ENCODE measurements at regions of chr7 and their contacts with region 1.

Region 1: GRCh38 chr7:18590744-18591340 is 95.3 kb downstream of the HDAC9 start:
- DNase-seq: no peak
- H3K4me3 ChIP-seq: no peak overlapping the region
- H3K27ac ChIP-seq: no peak overlapping the region
- H3K4me1 ChIP-seq: peaks cover 0 to 7% (median 3%) of the 10 kb centered on the region in 4 donors
- H3K27me3 ChIP-seq: no peaks in the 10 kb centered on the region
- CTCF ChIP-seq: peak; percentile 31 to 49 (median 42)
- EP300 ChIP-seq: no peak
- POLR2A ChIP-seq: no peak

Region 2: GRCh38 chr7:18520450-18521235 is 70.2 kb before region 1 on chr7:
- in situ Hi-C with region 1: no loop called
- intact Hi-C with region 1: no loop called
- DNase-seq: no peak
- H3K4me3 ChIP-seq: no peak overlapping the region
- H3K27ac ChIP-seq: peak overlapping the region in 3 of 4 donors; percentile 28 to 57 (median 40)
- H3K4me1 ChIP-seq: no peaks in the 10 kb centered on the region
- H3K27me3 ChIP-seq: no peaks in the 10 kb centered on the region
- CTCF ChIP-seq: no peak
- EP300 ChIP-seq: no peak
- POLR2A ChIP-seq: no peak

Region 3: DNA sequence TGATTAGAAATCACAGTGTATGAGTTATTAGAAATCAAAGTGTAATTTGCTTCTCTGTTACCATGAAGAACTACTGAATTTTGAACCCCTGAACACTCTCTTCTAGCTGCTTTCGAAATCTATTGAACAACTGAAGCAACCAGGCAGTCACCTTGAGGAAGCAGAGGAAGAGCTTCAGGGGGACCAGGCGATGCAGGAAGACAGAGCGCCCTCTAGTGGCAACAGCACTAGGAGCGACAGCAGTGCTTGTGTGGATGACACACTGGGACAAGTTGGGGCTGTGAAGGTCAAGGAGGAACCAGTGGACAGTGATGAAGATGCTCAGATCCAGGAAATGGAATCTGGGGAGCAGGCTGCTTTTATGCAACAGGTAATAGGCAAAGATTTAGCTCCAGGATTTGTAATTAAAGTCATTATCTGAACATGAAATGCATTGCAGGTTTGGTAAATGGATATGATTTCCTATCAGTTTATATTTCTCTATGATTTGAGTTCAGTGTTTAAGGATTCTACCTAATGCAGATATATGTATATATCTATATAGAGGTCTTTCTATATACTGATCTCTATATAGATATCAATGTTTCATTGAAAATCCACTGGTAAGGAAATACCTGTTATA is 75.4 kb after region 1 on chr7:
- in situ Hi-C with region 1: loop called in 1 of 4 experiments (anchors 10 kb)
- intact Hi-C with region 1: no loop called
- DNase-seq: peak; percentile 81
- H3K4me3 ChIP-seq: no peak overlapping the region
- H3K27ac ChIP-seq: no peak overlapping the region
- H3K4me1 ChIP-seq: peaks cover 0 to 6% (median 0%) of the 10 kb centered on the region in 4 donors
- H3K27me3 ChIP-seq: no peaks in the 10 kb centered on the region
- CTCF ChIP-seq: peak; percentile 67 to 95 (median 88)
- EP300 ChIP-seq: no peak
- POLR2A ChIP-seq: no peak

Measured in transverse colon (tissue), 4 donors.